CD8-positive, alpha-beta T cell (primary cell): ENCODE measurements at regions of chr10 and their contacts with region 1.

Region 1: DNA sequence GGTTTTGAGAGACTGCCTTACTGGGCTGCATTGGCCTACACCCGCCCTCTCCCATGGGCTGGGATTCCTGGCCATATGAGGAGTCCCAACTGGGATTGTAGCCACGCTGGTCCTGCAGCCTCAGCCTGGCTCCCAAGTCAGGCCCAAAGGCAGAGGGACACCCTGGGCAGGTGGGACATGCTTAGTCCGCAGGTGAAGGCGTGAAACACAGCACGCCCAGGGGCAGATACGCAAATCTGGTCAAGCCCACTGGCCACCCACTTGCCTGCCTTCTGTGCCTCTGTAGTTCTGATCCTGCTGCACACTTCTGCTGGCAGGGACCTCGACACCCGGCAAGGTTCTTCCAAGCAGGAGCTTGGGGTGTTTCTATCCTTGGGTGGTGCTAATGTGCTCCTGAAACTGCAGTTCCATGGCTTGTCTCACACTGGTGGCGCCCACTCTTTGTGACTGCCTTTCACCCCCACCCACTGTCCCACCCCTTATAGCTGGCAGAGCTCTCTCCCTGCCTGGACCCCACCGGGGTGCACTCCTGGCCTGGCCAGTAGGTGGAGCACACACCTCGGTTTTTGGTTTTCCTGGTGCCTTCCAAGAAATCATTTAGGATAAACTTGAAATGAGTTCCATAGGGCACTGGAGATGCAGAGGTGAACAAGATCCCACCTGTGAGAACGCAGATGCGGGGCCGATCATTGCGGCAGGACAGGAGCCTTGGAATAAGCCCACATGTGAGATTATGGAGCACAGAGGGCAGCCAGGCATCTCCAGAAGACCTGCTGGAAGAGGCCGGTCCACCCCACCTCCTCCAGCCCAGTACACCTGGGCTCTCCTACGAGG is 47.9 kb downstream of the MKI67 start:
- DNase-seq: peak in 5 of 9 experiments; percentile 29 to 72 (median 51)
- ATAC-seq: peak; percentile 78
- H3K4me3 ChIP-seq: no peak overlapping the region
- H3K4me3 Mint-ChIP-seq: no peak overlapping the region
- H3K27ac ChIP-seq: no peak overlapping the region
- H3K27ac Mint-ChIP-seq: no peak overlapping the region
- H3K4me1 ChIP-seq: no peaks in the 10 kb centered on the region
- H3K4me1 Mint-ChIP-seq: peaks cover 6% of the 10 kb centered on the region
- H3K27me3 ChIP-seq: no peaks in the 10 kb centered on the region
- H3K27me3 Mint-ChIP-seq: no peaks in the 10 kb centered on the region
- CTCF ChIP-seq: peak; percentile 44

Region 2: GRCh38 chr10:128035557-128035973 is 42.8 kb before region 1 on chr10:
- CTCF ChIA-PET with region 1: interaction called, 396 read pairs
- POLR2A ChIA-PET with region 1: no interaction called
- intact Hi-C with region 1: no loop called
- DNase-seq: peak; percentile 40 to 78 (median 70)
- ATAC-seq: peak; percentile 78
- H3K4me3 ChIP-seq: no peak overlapping the region
- H3K4me3 Mint-ChIP-seq: no peak overlapping the region
- H3K27ac ChIP-seq: no peak overlapping the region
- H3K27ac Mint-ChIP-seq: no peak overlapping the region
- H3K4me1 ChIP-seq: no peaks in the 10 kb centered on the region
- H3K4me1 Mint-ChIP-seq: no peaks in the 10 kb centered on the region
- H3K27me3 ChIP-seq: no peaks in the 10 kb centered on the region
- H3K27me3 Mint-ChIP-seq: no peaks in the 10 kb centered on the region
- CTCF ChIP-seq: peak; percentile 73

Region 3: DNA sequence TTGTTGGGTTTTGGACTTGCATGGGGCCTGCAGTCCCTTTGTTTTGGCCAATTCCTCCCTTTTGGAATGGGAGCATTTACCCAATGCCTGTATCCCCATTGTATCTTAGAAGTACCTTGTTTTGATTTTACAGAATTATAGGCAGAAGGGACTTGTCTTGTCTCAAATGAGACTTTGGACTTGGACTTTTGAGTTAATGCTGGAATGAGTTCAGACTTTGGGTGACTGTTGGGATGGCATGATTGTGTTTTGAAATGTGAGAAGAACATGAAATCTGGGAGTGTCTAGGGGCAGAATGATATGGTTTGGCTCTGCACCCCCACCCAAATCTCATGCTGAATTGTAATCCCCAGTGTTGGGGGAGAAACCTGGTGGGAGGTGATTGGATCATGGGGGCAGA is 124.7 kb after region 1 on chr10:
- CTCF ChIA-PET with region 1: no interaction called
- POLR2A ChIA-PET with region 1: no interaction called
- intact Hi-C with region 1: no loop called
- DNase-seq: no peak
- ATAC-seq: no peak
- H3K4me3 ChIP-seq: no peak overlapping the region
- H3K4me3 Mint-ChIP-seq: no peak overlapping the region
- H3K27ac ChIP-seq: no peak overlapping the region
- H3K27ac Mint-ChIP-seq: no peak overlapping the region
- H3K4me1 ChIP-seq: no peaks in the 10 kb centered on the region
- H3K4me1 Mint-ChIP-seq: no peaks in the 10 kb centered on the region
- H3K27me3 ChIP-seq: no peaks in the 10 kb centered on the region
- H3K27me3 Mint-ChIP-seq: peaks cover 4% of the 10 kb centered on the region
- CTCF ChIP-seq: no peak